ENCODE measurements at regions of chr2 and their contacts with region 1.

Region 1: GRCh38 chr2:15939854-15940660 is at the start of gene MYCN:
- DNase-seq: peak; percentile 53
- ATAC-seq: peak; percentile 47
- total RNA-seq, gene MYCN: 0.45 TPM

Region 2: GRCh38 chr2:15636972-15637785 is 302.9 kb before region 1 on chr2:
- intact Hi-C with region 1: loop called (anchors 10 kb)
- DNase-seq: peak; percentile 78
- ATAC-seq: peak; percentile 87

Region 3: GRCh38 chr2:15890936-15891900 is 48.8 kb before region 1 on chr2:
- intact Hi-C with region 1: no loop called
- DNase-seq: peak; percentile 29
- ATAC-seq: peak; percentile 56

Region 4: DNA sequence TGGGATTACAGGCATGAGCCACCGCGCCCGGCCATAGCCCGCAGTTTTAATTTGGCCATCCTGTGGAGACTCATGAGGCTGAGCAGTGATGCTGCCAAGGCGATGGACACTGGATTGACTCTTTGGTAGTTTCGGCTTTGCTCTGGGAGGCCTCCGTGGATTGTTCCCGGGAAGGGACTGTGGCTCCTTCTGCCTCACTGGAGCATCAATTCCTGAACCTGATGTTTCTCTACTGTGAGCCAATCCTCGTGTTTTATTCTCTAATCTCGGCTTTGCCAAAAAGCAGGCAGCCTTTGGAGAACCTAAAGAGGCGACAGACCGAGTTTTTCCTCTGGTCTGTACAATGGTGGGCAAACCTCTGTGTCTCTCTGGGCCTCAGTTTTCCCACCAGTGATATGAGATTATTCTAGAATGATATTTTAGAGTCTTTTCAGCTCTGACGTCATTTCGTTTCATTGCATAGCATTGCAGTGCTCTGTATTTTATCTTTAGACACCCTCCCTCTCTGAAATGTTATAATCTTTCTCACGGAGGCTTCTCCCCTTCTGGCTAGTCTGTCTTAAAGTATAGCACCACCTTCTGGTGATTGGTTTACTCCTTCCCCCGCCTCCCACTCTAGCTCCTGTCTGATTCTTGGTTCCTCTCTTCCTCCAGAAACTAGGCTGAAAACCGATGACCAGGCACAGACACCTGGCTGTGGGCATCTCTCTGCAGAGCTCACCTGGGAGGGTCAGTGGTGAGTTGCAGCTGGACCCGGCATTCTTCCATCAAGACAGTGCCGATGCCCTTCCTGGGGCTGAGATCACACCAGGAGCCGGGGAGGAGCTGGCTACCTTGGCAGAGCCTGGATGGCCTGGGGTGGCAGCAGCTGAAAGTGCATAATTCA is 341.6 kb after region 1 on chr2:
- intact Hi-C with region 1: loop called (anchors 10 kb)
- DNase-seq: no peak
- ATAC-seq: peak; percentile 69

Region 5: DNA sequence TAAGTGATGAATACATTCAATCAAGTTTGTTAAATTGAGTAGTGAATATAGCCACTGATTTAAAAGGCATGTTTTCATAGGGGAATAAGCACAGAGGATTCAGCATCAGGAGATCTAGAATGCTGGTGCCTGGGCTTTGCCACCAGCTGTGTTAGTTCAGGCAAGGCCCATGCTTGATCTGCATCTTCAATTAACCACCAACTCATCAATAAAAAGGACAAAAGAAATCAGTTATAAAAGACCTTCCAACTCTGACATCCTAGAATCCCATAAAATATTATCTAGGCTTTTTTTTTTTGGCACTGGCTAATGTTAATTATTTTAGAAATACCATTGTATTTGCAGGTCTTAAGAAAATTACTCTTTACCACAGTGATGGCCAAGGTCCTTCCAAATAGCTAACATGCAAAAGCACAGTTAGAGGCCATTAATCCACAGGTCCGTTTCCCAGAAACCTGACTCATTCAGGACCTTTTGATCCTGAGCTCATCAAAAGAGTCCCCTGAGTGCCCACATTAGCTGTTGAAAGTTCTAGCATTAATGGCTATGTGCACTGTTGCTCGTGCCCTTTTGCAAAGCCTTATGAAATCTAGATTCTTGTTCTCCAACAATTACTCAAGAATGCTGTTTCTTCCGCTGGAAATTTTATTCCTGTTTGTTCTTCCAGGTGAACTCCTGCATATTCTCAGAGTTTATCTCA is 555.6 kb after region 1 on chr2:
- intact Hi-C with region 1: loop called (anchors 10 kb)
- DNase-seq: no peak
- ATAC-seq: no peak